ENCODE measurements at regions of chr3 and their contacts with region 1.

Region 1: DNA sequence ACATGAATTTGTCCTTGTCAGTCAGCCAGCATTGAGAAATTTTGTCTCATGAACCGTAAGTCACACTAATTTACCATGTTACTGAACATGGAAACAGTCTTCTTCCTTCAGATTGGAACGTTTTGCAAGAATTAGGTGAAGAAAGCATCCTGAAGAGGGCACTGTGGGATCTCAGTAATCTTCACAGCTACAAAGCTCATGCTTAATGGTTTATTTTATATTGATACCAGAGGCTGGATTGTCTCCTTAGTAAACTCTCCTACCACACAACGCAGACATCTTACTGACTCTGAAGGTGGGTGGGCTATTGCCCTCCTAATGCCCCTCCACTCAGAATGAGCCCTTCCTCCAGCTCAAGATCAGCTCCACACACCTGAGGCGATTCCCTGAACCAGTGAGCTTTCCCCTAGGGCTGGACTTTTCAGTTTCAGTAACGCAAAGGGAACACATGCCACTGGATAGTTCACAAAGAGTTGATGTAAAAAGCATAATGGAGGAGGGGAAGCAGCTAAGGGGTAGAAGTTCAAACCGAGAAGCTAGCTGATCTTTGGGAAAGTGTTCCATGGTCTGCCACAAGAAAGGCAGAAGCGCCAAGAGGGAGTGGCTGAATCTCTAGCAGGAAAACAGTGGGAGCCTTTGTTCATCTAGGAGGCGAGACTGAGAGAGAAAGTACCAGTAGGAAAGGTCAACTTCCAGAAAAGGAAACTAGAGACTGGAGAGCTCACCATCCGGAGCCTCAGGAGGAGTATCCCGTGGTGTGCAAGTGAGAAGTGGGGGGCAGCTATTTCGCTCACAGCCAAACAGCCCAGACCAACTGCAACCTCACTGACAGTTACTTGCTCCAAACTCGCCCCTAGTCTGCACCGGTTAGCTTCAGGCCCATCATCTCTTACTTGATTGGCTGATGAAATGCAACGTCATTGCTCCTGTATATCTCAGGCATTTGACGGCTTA is at the start of gene SLC9C1:
- DNase-seq: peak in 5 of 9 experiments; percentile 23 to 75 (median 39)
- ATAC-seq: peak; percentile 66
- H3K4me3 ChIP-seq: peak within 1 kb of the TSS in 1 of 2 experiments; percentile 13
- H3K4me3 Mint-ChIP-seq: peak within 1 kb of the TSS; percentile 71
- H3K27ac ChIP-seq: no peak within 1 kb of the TSS
- H3K27ac Mint-ChIP-seq: no peak within 1 kb of the TSS
- H3K4me1 ChIP-seq: peaks cover 7% of the 10 kb centered on the region
- H3K4me1 Mint-ChIP-seq: peaks cover 22% of the 10 kb centered on the region
- H3K27me3 ChIP-seq: no peaks in the 10 kb centered on the region
- H3K27me3 Mint-ChIP-seq: no peaks in the 10 kb centered on the region
- CTCF ChIP-seq: peak; percentile 27
- total RNA-seq, gene SLC9C1: not detected

Region 2: GRCh38 chr3:112136959-112137693 is 156.5 kb before region 1 on chr3:
- CTCF ChIA-PET with region 1: interaction called, 4 read pairs
- POLR2A ChIA-PET with region 1: no interaction called
- intact Hi-C with region 1: loop called in 1 of 2 experiments (anchors 2 kb)
- DNase-seq: peak in 5 of 9 experiments; percentile 35 to 69 (median 46)
- ATAC-seq: peak; percentile 21
- H3K4me3 ChIP-seq: no peak overlapping the region
- H3K4me3 Mint-ChIP-seq: no peak overlapping the region
- H3K27ac ChIP-seq: no peak overlapping the region
- H3K27ac Mint-ChIP-seq: no peak overlapping the region
- H3K4me1 ChIP-seq: peaks cover 36% of the 10 kb centered on the region
- H3K4me1 Mint-ChIP-seq: peaks cover 62% of the 10 kb centered on the region
- H3K27me3 ChIP-seq: no peaks in the 10 kb centered on the region
- H3K27me3 Mint-ChIP-seq: no peaks in the 10 kb centered on the region
- CTCF ChIP-seq: peak; percentile 55

Region 3: GRCh38 chr3:112303764-112304325 is 10.2 kb after region 1 on chr3:
- CTCF ChIA-PET with region 1: interaction called, 58 read pairs
- POLR2A ChIA-PET with region 1: interaction called, 3 read pairs
- intact Hi-C with region 1: no loop called
- DNase-seq: peak in 6 of 9 experiments; percentile 16 to 61 (median 31)
- ATAC-seq: peak; percentile 83
- H3K4me3 ChIP-seq: peak overlapping the region; percentile 44 to 60
- H3K4me3 Mint-ChIP-seq: no peak overlapping the region
- H3K27ac ChIP-seq: peak overlapping the region in 1 of 2 experiments; percentile 19
- H3K27ac Mint-ChIP-seq: no peak overlapping the region
- H3K4me1 ChIP-seq: peaks cover 14% of the 10 kb centered on the region
- H3K4me1 Mint-ChIP-seq: peaks cover 1% of the 10 kb centered on the region
- H3K27me3 ChIP-seq: no peaks in the 10 kb centered on the region
- H3K27me3 Mint-ChIP-seq: no peaks in the 10 kb centered on the region
- CTCF ChIP-seq: no peak

Region 4: DNA sequence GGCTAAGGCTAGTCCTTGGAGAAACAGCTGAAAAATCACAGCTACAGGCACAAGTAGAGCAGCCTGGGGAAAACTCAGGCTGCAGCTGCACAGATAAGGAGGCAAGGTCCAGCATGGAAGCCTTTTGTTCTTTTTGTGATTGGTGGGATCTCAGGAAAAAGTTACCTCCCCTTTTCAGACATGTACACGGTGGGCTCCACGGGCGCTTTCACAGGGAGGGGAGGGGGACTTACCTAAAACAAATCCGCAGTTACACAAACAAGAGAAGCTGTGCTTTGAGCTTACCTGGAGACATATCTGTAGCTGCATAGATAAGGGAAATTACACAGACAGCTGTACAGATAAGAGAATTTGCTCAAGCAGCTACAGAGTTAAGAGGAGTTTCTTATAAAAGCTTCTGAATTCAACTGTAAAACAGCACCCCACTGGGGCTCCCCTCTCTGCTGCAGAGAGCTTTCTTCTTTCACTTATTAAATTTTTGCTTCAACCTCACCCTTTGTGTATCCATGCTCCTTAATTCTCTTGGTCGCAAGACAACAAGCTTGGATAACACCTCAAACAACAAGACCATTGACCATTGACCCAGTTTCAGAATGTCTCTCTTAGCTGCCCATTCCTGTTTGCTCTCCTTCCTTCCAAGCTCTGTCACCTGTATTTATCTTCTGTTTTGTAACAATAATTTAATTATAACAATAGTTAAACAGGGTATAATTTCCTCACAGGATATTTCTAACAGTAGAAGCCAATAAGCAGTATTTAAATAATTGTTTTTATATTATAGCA is 28.4 kb after region 1 on chr3:
- CTCF ChIA-PET with region 1: interaction called, 10 read pairs
- POLR2A ChIA-PET with region 1: no interaction called
- intact Hi-C with region 1: no loop called
- DNase-seq: no peak
- ATAC-seq: no peak
- H3K4me3 ChIP-seq: no peak overlapping the region
- H3K4me3 Mint-ChIP-seq: no peak overlapping the region
- H3K27ac ChIP-seq: no peak overlapping the region
- H3K27ac Mint-ChIP-seq: no peak overlapping the region
- H3K4me1 ChIP-seq: no peaks in the 10 kb centered on the region
- H3K4me1 Mint-ChIP-seq: no peaks in the 10 kb centered on the region
- H3K27me3 ChIP-seq: no peaks in the 10 kb centered on the region
- H3K27me3 Mint-ChIP-seq: no peaks in the 10 kb centered on the region
- CTCF ChIP-seq: no peak

Region 5: GRCh38 chr3:112333002-112333380 is 39.3 kb after region 1 on chr3 and contains the start of gene CD200:
- CTCF ChIA-PET with region 1: interaction called, 13 read pairs
- POLR2A ChIA-PET with region 1: interaction called, 3 read pairs
- intact Hi-C with region 1: no loop called
- DNase-seq: peak in 8 of 9 experiments; percentile 24 to 66 (median 46)
- ATAC-seq: peak; percentile 76
- H3K4me3 ChIP-seq: peak within 1 kb of the TSS; percentile 62 to 71
- H3K4me3 Mint-ChIP-seq: peak within 1 kb of the TSS; percentile 94
- H3K27ac ChIP-seq: peak within 1 kb of the TSS in 1 of 2 experiments; percentile 19
- H3K27ac Mint-ChIP-seq: peak within 1 kb of the TSS; percentile 85
- H3K4me1 ChIP-seq: no peaks in the 10 kb centered on the region
- H3K4me1 Mint-ChIP-seq: peaks cover 35% of the 10 kb centered on the region
- H3K27me3 ChIP-seq: peaks cover 0 to 3% of the 10 kb centered on the region in 2 experiments
- H3K27me3 Mint-ChIP-seq: peaks cover 2% of the 10 kb centered on the region
- CTCF ChIP-seq: no peak
- total RNA-seq, gene CD200: 1.1 to 1.2 TPM

Region 6: DNA sequence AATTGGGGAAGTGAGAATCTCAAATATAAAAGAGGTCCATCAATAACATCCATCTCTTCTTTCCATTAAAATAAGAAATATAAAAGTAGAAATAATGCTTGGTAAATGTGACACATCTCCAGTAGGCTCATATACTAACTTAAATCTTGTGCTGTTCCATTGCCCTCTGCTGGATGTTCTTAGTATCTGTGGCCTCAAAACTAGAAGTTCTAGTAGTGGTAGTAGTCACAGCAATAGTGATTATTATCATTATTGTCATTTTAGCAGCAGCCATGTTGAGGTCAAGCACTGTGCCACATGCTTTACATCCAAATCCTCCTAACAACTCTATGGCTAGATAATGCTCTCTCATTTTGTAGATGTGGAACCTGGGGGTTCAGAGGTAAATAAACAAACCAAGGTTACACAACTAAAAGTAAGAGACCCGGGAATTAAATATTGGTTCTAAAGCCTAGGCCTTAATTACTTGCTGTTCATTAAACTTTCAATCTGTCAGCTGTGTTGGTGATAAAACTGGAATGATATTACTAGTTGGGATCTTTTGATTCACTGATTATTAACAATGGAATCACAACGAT is 225.9 kb after region 1 on chr3:
- CTCF ChIA-PET with region 1: interaction called, 28 read pairs
- POLR2A ChIA-PET with region 1: no interaction called
- intact Hi-C with region 1: loop called (anchors 1 kb)
- DNase-seq: peak in 4 of 9 experiments; percentile 27 to 79 (median 48)
- ATAC-seq: peak; percentile 92
- H3K4me3 ChIP-seq: no peak overlapping the region
- H3K4me3 Mint-ChIP-seq: no peak overlapping the region
- H3K27ac ChIP-seq: no peak overlapping the region
- H3K27ac Mint-ChIP-seq: no peak overlapping the region
- H3K4me1 ChIP-seq: peaks cover 4% of the 10 kb centered on the region
- H3K4me1 Mint-ChIP-seq: peaks cover 16% of the 10 kb centered on the region
- H3K27me3 ChIP-seq: no peaks in the 10 kb centered on the region
- H3K27me3 Mint-ChIP-seq: no peaks in the 10 kb centered on the region
- CTCF ChIP-seq: peak; percentile 80

Region 7: GRCh38 chr3:112531358-112531781 is 237.7 kb after region 1 on chr3:
- CTCF ChIA-PET with region 1: interaction called, 15 read pairs
- POLR2A ChIA-PET with region 1: no interaction called
- intact Hi-C with region 1: loop called in 1 of 2 experiments (anchors 1 kb)
- DNase-seq: peak in 2 of 9 experiments; percentile 38 to 56
- ATAC-seq: peak; percentile 20
- H3K4me3 ChIP-seq: no peak overlapping the region
- H3K4me3 Mint-ChIP-seq: no peak overlapping the region
- H3K27ac ChIP-seq: no peak overlapping the region
- H3K27ac Mint-ChIP-seq: peak overlapping the region; percentile 39
- H3K4me1 ChIP-seq: no peaks in the 10 kb centered on the region
- H3K4me1 Mint-ChIP-seq: no peaks in the 10 kb centered on the region
- H3K27me3 ChIP-seq: no peaks in the 10 kb centered on the region
- H3K27me3 Mint-ChIP-seq: no peaks in the 10 kb centered on the region
- CTCF ChIP-seq: peak; percentile 78

Measured in CD8-positive, alpha-beta T cell (primary cell).